H1 (cell line): ENCODE measurements at regions of chr3 and their contacts with region 1.

Region 1: DNA sequence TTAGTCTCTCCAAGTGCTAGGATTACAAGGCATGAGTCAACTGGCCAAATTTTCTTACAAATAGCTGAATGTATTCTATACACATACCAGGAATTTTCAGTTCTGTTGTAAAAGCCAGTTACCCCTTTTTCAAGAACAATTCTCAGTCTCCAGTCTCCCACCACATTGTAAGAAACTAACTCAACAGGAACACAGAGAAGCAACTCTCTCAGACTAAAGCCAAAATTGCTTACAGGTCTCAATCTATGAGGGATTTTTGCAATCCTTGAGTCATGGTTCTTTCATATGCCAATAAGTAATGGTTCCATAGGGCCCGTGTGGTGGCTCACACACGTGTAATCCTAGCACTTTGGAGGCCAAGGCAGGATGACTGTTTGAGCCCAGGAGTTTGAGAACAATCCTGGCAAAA is 8.5 kb downstream of the IP6K2 start:
- DNase-seq: no peak
- H3K4me3 ChIP-seq: no peak overlapping the region
- H3K27ac ChIP-seq: no peak overlapping the region; the same call in 1 of the 2 replicates
- H3K4me1 ChIP-seq: peaks cover 0 to 3% (median 3%) of the 10 kb centered on the region in 4 experiments; a peak in 2 of 7 replicates
- H3K27me3 ChIP-seq: no peaks in the 10 kb centered on the region
- CTCF ChIP-seq: no peak
- EP300 ChIP-seq: no peak
- POLR2A ChIP-seq: no peak
- RAD21 ChIP-seq: no peak

Region 2: GRCh38 chr3:48694610-48695392 is 13.7 kb before region 1 on chr3:
- CTCF ChIA-PET with region 1: interaction called, 3 read pairs
- POLR2A ChIA-PET with region 1: interaction called, 187 read pairs
- DNase-seq: no peak
- H3K4me3 ChIP-seq: peak overlapping the region in 3 of 4 experiments; percentile 12 to 36 (median 20); a peak in 5 of 8 replicates
- H3K27ac ChIP-seq: peak overlapping the region; percentile 69
- H3K4me1 ChIP-seq: peaks cover 6 to 7% (median 6%) of the 10 kb centered on the region in 4 experiments
- H3K27me3 ChIP-seq: no peaks in the 10 kb centered on the region
- CTCF ChIP-seq: no peak
- EP300 ChIP-seq: no peak
- POLR2A ChIP-seq: no peak
- RAD21 ChIP-seq: no peak